Heart right ventricle (tissue), 16 donors: ENCODE measurements at regions of chr9 and their contacts with region 1.

Region 1: GRCh38 chr9:100111235-100111634 is 12.2 kb downstream of the INVS start:
- DNase-seq: peak; percentile 81 to 83
- ATAC-seq: peak; percentile 95 to 99 (median 98)
- H3K4me3 ChIP-seq: peak overlapping the region in 1 of 10 donors; percentile 3
- H3K27ac ChIP-seq: peak overlapping the region in 9 of 10 donors; percentile 7 to 67 (median 59)
- H3K4me1 ChIP-seq: peaks cover 0 to 28% (median 16%) of the 10 kb centered on the region in 9 donors
- H3K27me3 ChIP-seq: no peaks in the 10 kb centered on the region
- CTCF ChIP-seq: no peak

Region 2: GRCh38 chr9:99368341-99369323 is 742.6 kb before region 1 on chr9:
- intact Hi-C with region 1: no loop called
- DNase-seq: peak; percentile 62 to 80
- ATAC-seq: peak; percentile 92 to 98 (median 96)
- H3K4me3 ChIP-seq: peak overlapping the region in 9 of 10 donors; percentile 31 to 60 (median 51)
- H3K27ac ChIP-seq: peak overlapping the region; percentile 80 to 94 (median 85)
- H3K4me1 ChIP-seq: peaks cover 0 to 23% (median 13%) of the 10 kb centered on the region in 9 donors
- H3K27me3 ChIP-seq: peaks cover 0 to 4% (median 0%) of the 10 kb centered on the region in 7 donors
- CTCF ChIP-seq: no peak

Region 3: GRCh38 chr9:100066539-100066938 is 44.7 kb before region 1 on chr9:
- intact Hi-C with region 1: loop called in 1 of 10 experiments (anchors 10 kb)
- DNase-seq: peak in 1 of 2 donors; percentile 40
- ATAC-seq: peak in 7 of 8 donors; percentile 69 to 91 (median 81)
- H3K4me3 ChIP-seq: peak overlapping the region in 6 of 10 donors; percentile 1 to 21 (median 14)
- H3K27ac ChIP-seq: peak overlapping the region in 5 of 10 donors; percentile 1 to 39 (median 23)
- H3K4me1 ChIP-seq: peaks cover 0 to 41% (median 26%) of the 10 kb centered on the region in 9 donors
- H3K27me3 ChIP-seq: no peaks in the 10 kb centered on the region
- CTCF ChIP-seq: no peak

Region 4: DNA sequence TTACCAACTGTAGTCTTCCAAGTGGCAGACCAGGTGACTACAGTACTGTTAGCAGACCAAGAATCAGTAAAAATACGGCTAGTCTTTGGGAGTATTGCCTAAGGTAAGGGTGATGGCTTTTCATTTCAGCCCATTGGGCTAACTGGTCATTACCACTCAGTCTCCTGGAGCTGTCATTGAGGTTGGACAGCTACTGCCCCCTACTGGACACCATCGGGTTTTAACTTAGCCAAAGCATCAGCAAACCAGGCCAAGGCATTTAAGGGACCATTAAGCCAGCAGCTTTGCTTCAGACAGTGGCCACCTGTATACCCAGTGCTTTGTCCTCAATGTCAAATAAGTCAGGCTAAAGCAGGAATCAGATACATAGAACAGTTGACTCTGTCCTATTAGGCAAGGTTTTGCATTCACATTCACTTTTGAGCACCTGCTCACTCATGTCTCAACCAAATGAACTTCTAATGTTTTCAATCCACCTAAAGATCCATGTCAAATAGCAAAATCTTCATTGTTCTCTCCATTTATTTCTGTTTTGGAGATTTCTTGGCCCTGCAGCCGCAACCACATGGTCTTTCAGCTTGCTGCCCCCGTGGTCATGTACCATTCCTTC is 105.0 kb after region 1 on chr9:
- intact Hi-C with region 1: loop called in 3 of 10 experiments (anchors 5 to 10 kb)
- DNase-seq: peak in 1 of 2 donors; percentile 54
- ATAC-seq: peak in 6 of 8 donors; percentile 48 to 70 (median 58)
- H3K4me3 ChIP-seq: no peak overlapping the region
- H3K27ac ChIP-seq: no peak overlapping the region
- H3K4me1 ChIP-seq: peaks cover 0 to 14% (median 0%) of the 10 kb centered on the region in 9 donors
- H3K27me3 ChIP-seq: no peaks in the 10 kb centered on the region
- CTCF ChIP-seq: peak; percentile 44 to 75 (median 62)